K562 (cell line): ENCODE measurements at regions of chr20 and their contacts with region 1.

Region 1: DNA sequence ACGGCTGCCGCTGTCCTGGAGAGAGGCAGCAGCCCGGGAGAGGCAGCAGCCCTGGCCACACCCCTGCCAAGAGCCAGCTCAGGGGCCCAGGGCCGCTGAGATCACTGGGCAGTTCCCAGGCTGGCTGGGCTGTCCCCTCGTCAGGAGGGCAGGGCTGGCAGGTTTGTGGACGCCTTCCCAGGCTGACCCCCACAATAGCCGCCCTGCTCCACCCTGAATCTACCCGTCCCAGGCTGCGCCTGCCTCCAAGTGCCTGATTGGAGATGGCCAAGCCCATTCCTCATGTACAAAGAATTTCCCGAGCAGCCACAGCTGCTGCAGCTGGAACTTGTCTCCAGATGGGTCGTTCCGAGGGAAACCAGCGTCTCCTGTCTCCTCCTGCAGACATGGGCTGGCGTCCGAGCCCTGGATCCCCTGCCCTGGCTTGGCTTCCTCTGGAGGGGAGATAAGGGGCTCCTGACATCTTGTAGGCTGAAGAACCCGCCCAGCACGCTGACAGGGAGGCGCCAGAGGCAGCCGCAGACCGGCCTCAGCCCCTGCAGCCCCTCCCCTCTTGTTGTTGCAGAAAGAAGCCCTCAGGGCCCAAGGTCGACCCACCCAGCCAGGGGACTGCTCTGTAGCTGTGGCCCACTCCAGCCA is 9.4 kb upstream of the GATA5 start:
- DNase-seq: peak; percentile 64 to 85 (median 72)
- ATAC-seq: peak; percentile 76
- H3K4me3 ChIP-seq: no peak overlapping the region
- H3K27ac ChIP-seq: peak overlapping the region; percentile 29
- H3K4me1 ChIP-seq: peaks cover 63 to 95% of the 10 kb centered on the region in 2 experiments
- H3K27me3 ChIP-seq: peaks cover 0 to 11% of the 10 kb centered on the region in 2 experiments; a peak in 2 of 5 replicates
- CTCF ChIP-seq: peak in 1 of 3 experiments; percentile 13; a peak in 1 of 6 replicates
- EP300 ChIP-seq: no peak
- POLR2A ChIP-seq: no peak
- RAD21 ChIP-seq: no peak

Region 2: GRCh38 chr20:62407221-62407992 is 77.8 kb before region 1 on chr20 and contains the start of gene CABLES2:
- CTCF ChIA-PET with region 1: no interaction called
- POLR2A ChIA-PET with region 1: no interaction called
- in situ Hi-C with region 1: no loop called
- intact Hi-C with region 1: loop called (anchors 5 kb)
- DNase-seq: peak; percentile 95 to 96 (median 96)
- ATAC-seq: peak; percentile 94
- H3K4me3 ChIP-seq: peak within 1 kb of the TSS; percentile 58
- H3K27ac ChIP-seq: peak within 1 kb of the TSS; percentile 65
- H3K4me1 ChIP-seq: peaks cover 17 to 88% of the 10 kb centered on the region in 2 experiments
- H3K27me3 ChIP-seq: no peaks in the 10 kb centered on the region
- CTCF ChIP-seq: peak in 2 of 3 experiments; percentile 14 to 36; a peak in 2 of 6 replicates
- EP300 ChIP-seq: no peak
- POLR2A ChIP-seq: peak; percentile 52; the same call in 1 of the 2 replicates
- RAD21 ChIP-seq: peak in 1 of 2 experiments; percentile 44; a peak in 1 of 4 replicates
- polyA plus RNA-seq, gene CABLES2: 0.46 to 0.72 TPM

Region 3: GRCh38 chr20:62550087-62550632 is 65.0 kb after region 1 on chr20:
- CTCF ChIA-PET with region 1: no interaction called
- POLR2A ChIA-PET with region 1: no interaction called
- in situ Hi-C with region 1: no loop called
- intact Hi-C with region 1: no loop called
- DNase-seq: peak in 2 of 4 experiments; percentile 55 to 61
- ATAC-seq: no peak
- H3K4me3 ChIP-seq: no peak overlapping the region
- H3K27ac ChIP-seq: no peak overlapping the region
- H3K4me1 ChIP-seq: peaks cover 0 to 71% of the 10 kb centered on the region in 2 experiments; a peak in 2 of 5 replicates
- H3K27me3 ChIP-seq: peaks cover 40 to 43% of the 10 kb centered on the region in 2 experiments
- CTCF ChIP-seq: no peak
- EP300 ChIP-seq: no peak
- POLR2A ChIP-seq: no peak
- RAD21 ChIP-seq: no peak